IMR-90 (cell line): ENCODE measurements at regions of chr2 and their contacts with region 1.

Region 1: GRCh38 chr2:199019898-199020507 is 437.7 kb downstream of the SATB2 start:
- DNase-seq: peak; percentile 59
- ATAC-seq: peak; percentile 54; the same call in 1 of the 2 replicates
- H3K4me3 ChIP-seq: no peak overlapping the region
- H3K27ac ChIP-seq: no peak overlapping the region
- H3K4me1 ChIP-seq: no peaks in the 10 kb centered on the region
- H3K27me3 ChIP-seq: no peaks in the 10 kb centered on the region
- CTCF ChIP-seq: peak; percentile 47
- POLR2A ChIP-seq: no peak
- RAD21 ChIP-seq: peak; percentile 53

Region 2: DNA sequence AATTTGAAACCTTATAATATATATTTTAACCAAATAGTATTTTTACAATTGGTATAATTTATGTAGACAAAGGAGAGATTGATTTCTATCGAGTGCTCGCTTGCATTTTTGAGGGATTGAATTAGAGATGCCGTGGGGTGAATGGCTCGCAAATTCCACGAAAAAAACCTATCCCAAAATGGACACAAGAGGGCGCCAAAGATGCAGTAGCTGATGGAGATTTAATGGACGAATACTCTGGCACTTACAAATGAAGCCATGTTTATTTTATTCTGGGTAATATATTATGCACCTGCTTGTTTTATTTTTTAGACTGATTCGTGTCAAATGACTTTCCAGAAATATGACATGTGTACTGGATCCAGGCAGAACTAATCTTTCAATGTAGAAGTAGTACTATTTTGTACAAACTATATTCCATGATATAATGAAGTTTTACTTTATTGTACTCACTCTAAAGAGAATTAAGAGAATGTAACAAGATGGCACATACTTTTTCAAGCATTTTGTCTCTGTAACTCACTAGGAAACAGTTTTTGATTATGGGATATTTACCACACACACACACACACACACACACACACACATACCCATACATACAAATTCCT is 710.2 kb before region 1 on chr2:
- CTCF ChIA-PET with region 1: no interaction called
- POLR2A ChIA-PET with region 1: no interaction called
- dilution Hi-C with region 1: no loop called
- in situ Hi-C with region 1: no loop called
- intact Hi-C with region 1: loop called (anchors 10 kb)
- DNase-seq: peak; percentile 38
- ATAC-seq: peak; percentile 56
- H3K4me3 ChIP-seq: no peak overlapping the region
- H3K27ac ChIP-seq: no peak overlapping the region
- H3K4me1 ChIP-seq: no peaks in the 10 kb centered on the region
- H3K27me3 ChIP-seq: no peaks in the 10 kb centered on the region; the same call in 1 of the 2 replicates
- CTCF ChIP-seq: peak; percentile 81
- POLR2A ChIP-seq: no peak
- RAD21 ChIP-seq: peak; percentile 54

Region 3: GRCh38 chr2:199459286-199460016 is 439.4 kb after region 1 on chr2:
- CTCF ChIA-PET with region 1: interaction called, 3 read pairs
- POLR2A ChIA-PET with region 1: no interaction called
- dilution Hi-C with region 1: no loop called
- in situ Hi-C with region 1: no loop called
- intact Hi-C with region 1: loop called (anchors 5 kb)
- DNase-seq: peak; percentile 95
- ATAC-seq: peak; percentile 58
- H3K4me3 ChIP-seq: peak overlapping the region; percentile 78
- H3K27ac ChIP-seq: peak overlapping the region; percentile 96
- H3K4me1 ChIP-seq: no peaks in the 10 kb centered on the region; the same call in 1 of the 2 replicates
- H3K27me3 ChIP-seq: peaks cover 9% of the 10 kb centered on the region
- CTCF ChIP-seq: no peak
- POLR2A ChIP-seq: no peak
- RAD21 ChIP-seq: no peak

Region 4: GRCh38 chr2:199471443-199472057 is 451.5 kb after region 1 on chr2:
- CTCF ChIA-PET with region 1: interaction called, 3 read pairs
- POLR2A ChIA-PET with region 1: no interaction called
- dilution Hi-C with region 1: no loop called
- in situ Hi-C with region 1: loop called (anchors 10 kb)
- intact Hi-C with region 1: no loop called
- DNase-seq: peak; percentile 45
- ATAC-seq: peak; percentile 98
- H3K4me3 ChIP-seq: peak overlapping the region; percentile 28; the same call in 1 of the 2 replicates
- H3K27ac ChIP-seq: no peak overlapping the region
- H3K4me1 ChIP-seq: no peaks in the 10 kb centered on the region
- H3K27me3 ChIP-seq: peaks cover 65% of the 10 kb centered on the region
- CTCF ChIP-seq: peak; percentile 75
- POLR2A ChIP-seq: no peak
- RAD21 ChIP-seq: peak; percentile 45

Region 5: DNA sequence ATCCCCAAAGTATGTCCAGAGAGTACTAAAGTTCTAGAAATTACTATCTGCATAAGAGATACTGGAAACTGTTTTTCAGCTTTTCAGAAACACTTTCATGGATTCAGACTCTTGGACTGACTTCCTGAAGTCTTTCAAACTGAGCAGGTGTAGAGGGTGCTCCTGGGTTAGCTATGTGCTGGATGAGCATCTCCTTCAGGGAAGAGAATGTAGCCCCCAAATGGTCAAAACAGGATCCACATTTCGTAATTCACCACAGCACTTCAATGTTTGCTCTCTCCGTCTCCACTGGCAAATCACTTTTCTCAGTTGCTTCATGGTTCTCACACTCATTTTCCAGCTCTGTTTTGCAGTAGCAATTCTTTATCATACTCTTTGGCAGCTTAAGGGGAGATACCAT is 461.0 kb after region 1 on chr2:
- CTCF ChIA-PET with region 1: interaction called, 3 read pairs
- POLR2A ChIA-PET with region 1: no interaction called
- dilution Hi-C with region 1: no loop called
- in situ Hi-C with region 1: loop called (anchors 10 kb)
- intact Hi-C with region 1: loop called (anchors 2 kb)
- DNase-seq: no peak
- ATAC-seq: no peak
- H3K4me3 ChIP-seq: no peak overlapping the region
- H3K27ac ChIP-seq: no peak overlapping the region
- H3K4me1 ChIP-seq: no peaks in the 10 kb centered on the region
- H3K27me3 ChIP-seq: peaks cover 12% of the 10 kb centered on the region
- CTCF ChIP-seq: no peak
- POLR2A ChIP-seq: no peak
- RAD21 ChIP-seq: no peak